ENCODE measurements at regions of chr10 and their contacts with region 1.

Region 1: DNA sequence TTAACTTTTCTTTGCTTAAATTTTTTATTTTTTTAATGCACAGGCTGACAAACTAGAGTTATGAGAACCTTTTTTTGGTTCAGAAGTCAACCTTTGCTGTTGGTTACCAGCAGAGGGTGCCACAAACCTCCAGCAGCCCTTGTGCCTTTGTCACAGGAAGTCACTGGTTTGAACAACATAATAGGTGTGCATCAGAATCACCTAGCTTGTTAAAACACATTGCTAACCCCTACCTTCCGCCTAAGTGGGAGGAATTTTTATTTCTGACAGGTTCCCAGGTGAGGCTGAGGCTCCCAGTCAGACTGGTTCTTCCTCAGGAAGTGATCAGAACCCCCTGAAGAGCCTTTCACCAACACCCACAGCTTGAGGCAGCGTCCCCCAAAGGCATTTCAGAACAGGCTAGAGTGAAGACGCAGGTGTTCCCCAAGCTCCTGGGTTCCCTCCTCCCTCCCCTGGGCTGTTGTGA is 22.6 kb upstream of the VDAC2 start:
- DNase-seq: peak; percentile 99
- ATAC-seq: peak; percentile 64
- H3K4me3 ChIP-seq: no peak overlapping the region
- H3K27ac ChIP-seq: peak overlapping the region; percentile 6
- H3K4me1 ChIP-seq: peaks cover 31% of the 10 kb centered on the region
- H3K27me3 ChIP-seq: no peaks in the 10 kb centered on the region
- CTCF ChIP-seq: peak; percentile 98

Region 2: GRCh38 chr10:74394416-74394969 is 793.5 kb before region 1 on chr10:
- CTCF ChIA-PET with region 1: no interaction called
- POLR2A ChIA-PET with region 1: no interaction called
- intact Hi-C with region 1: no loop called
- DNase-seq: peak; percentile 43
- ATAC-seq: peak; percentile 85
- H3K4me3 ChIP-seq: no peak overlapping the region
- H3K27ac ChIP-seq: no peak overlapping the region
- H3K4me1 ChIP-seq: no peaks in the 10 kb centered on the region; the same call in 1 of the 2 replicates
- H3K27me3 ChIP-seq: no peaks in the 10 kb centered on the region
- CTCF ChIP-seq: no peak

Region 3: DNA sequence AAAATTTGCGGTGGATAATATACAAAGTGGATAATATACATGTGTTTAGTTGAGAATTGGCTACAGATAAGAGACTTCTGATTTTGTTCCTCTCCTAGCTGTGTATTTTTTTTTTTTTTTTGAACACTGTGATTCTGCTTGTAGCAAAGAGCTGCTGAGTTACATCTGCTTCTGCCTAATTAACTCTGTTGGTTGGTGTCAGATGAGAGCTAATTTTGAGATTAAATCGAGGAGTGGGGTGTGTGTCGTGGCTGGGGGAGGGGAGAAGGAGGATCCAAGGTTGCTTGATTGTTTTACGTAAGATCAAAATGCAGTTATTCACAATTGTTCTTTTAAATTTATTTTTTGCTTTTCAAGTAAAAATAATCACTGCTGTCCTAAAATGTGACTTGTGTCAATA is 350.3 kb before region 1 on chr10:
- CTCF ChIA-PET with region 1: no interaction called
- POLR2A ChIA-PET with region 1: interaction called, 11 read pairs
- intact Hi-C with region 1: no loop called
- DNase-seq: no peak
- ATAC-seq: no peak
- H3K4me3 ChIP-seq: no peak overlapping the region
- H3K27ac ChIP-seq: no peak overlapping the region
- H3K4me1 ChIP-seq: peaks cover 25% of the 10 kb centered on the region
- H3K27me3 ChIP-seq: no peaks in the 10 kb centered on the region
- CTCF ChIP-seq: no peak

Region 4: GRCh38 chr10:75111367-75111906 is 76.6 kb before region 1 on chr10 and contains the start of gene SAMD8:
- CTCF ChIA-PET with region 1: no interaction called
- POLR2A ChIA-PET with region 1: no interaction called
- intact Hi-C with region 1: loop called (anchors 1 kb)
- DNase-seq: peak; percentile 100
- ATAC-seq: peak; percentile 84
- H3K4me3 ChIP-seq: peak within 1 kb of the TSS; percentile 74
- H3K27ac ChIP-seq: peak within 1 kb of the TSS; percentile 64
- H3K4me1 ChIP-seq: peaks cover 25% of the 10 kb centered on the region
- H3K27me3 ChIP-seq: no peaks in the 10 kb centered on the region
- CTCF ChIP-seq: peak; percentile 50
- total RNA-seq, gene SAMD8: 47.4 and 48.6 TPM in 2 replicates

Region 5: GRCh38 chr10:75143353-75143752 is 44.6 kb before region 1 on chr10:
- CTCF ChIA-PET with region 1: interaction called, 12 read pairs
- POLR2A ChIA-PET with region 1: no interaction called
- intact Hi-C with region 1: no loop called
- DNase-seq: no peak
- ATAC-seq: no peak
- H3K4me3 ChIP-seq: no peak overlapping the region
- H3K27ac ChIP-seq: peak overlapping the region; percentile 34; the same call in 1 of the 2 replicates
- H3K4me1 ChIP-seq: peaks cover 20% of the 10 kb centered on the region
- H3K27me3 ChIP-seq: no peaks in the 10 kb centered on the region
- CTCF ChIP-seq: no peak

Region 6: DNA sequence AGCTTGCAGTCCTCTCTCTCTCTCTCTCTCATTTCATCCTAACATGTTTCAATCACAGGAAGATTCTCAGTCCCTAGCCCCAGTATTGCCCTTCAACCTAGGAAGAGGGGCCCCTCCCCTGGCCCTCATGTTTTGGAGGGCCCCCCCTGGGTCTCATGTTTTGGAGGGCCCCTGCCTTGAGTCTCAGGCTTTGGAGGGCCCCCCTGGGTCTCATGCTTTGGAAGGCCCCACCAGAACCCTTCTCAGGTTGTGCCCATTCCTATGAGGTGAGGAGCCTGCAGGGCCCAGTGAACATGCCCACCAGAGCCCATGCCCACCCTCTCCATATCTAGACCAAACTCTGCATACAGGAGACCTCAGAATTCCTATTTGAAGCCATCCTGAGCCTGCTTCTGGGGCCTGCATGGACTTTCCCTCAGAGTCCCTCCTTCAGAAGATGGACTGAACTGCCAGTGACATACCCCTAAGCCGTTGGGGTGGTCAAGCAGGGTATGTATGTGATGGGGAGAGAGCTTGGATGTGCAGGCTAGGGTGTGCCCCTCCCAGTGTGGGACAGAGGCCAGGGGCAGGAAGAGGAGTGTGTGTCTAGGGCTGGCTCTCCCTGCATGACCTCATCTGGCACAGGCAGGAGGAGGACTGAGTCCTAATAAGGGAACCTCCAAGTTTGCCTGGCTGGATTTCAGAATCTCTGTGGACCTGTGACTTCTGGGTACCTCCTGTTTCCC is 14.5 kb after region 1 on chr10:
- CTCF ChIA-PET with region 1: interaction called, 5 read pairs
- POLR2A ChIA-PET with region 1: interaction called, 5 read pairs
- intact Hi-C with region 1: loop called (anchors 1 kb)
- DNase-seq: peak; percentile 86
- ATAC-seq: peak; percentile 95
- H3K4me3 ChIP-seq: no peak overlapping the region
- H3K27ac ChIP-seq: peak overlapping the region; percentile 27
- H3K4me1 ChIP-seq: peaks cover 26% of the 10 kb centered on the region
- H3K27me3 ChIP-seq: no peaks in the 10 kb centered on the region
- CTCF ChIP-seq: no peak

Region 7: DNA sequence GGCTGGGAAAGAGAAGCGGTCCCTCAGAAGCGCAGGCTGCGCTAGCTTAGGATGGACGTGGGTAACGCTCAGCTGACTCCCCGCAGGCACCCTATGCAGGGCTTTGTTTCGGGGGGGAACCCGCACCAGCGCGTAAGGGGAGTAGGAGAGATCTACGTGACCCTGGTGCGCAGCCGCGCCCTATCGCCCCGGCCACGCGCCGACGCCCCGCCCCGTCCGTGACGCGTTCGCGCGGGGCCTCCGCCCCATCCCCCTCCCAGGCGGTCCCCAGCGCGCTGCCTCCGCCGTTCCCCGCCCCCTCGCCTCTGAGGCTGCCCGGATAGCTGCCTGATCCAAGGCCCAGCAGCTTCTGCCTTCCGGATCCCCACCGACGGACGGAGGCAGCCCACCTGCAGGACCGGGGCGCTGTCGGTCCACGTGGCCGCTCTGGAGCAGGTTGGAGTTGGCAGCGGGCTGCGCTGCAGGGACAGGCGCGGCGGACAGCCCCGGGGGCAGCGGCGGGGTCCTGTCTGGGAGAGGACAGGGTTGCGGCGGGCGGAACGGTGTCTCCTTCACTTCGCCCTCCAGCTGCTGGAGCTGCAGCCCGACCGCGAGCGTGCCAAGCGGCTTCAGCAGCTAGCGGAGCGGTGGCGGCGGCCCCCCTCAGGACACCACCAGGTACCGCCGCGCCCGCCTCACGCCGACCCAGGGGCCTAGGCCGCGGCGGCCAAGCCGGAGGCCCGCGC is 22.4 kb after region 1 on chr10 and contains the start of gene VDAC2:
- CTCF ChIA-PET with region 1: interaction called, 65 read pairs
- POLR2A ChIA-PET with region 1: interaction called, 23 read pairs
- intact Hi-C with region 1: loop called (anchors 1 kb)
- DNase-seq: peak; percentile 99
- ATAC-seq: peak; percentile 88
- H3K4me3 ChIP-seq: peak within 1 kb of the TSS; percentile 72
- H3K27ac ChIP-seq: peak within 1 kb of the TSS; percentile 85
- H3K4me1 ChIP-seq: peaks cover 45% of the 10 kb centered on the region
- H3K27me3 ChIP-seq: no peaks in the 10 kb centered on the region
- CTCF ChIP-seq: no peak
- total RNA-seq, gene VDAC2: 463 and 542 TPM in 2 replicates

Region 8: DNA sequence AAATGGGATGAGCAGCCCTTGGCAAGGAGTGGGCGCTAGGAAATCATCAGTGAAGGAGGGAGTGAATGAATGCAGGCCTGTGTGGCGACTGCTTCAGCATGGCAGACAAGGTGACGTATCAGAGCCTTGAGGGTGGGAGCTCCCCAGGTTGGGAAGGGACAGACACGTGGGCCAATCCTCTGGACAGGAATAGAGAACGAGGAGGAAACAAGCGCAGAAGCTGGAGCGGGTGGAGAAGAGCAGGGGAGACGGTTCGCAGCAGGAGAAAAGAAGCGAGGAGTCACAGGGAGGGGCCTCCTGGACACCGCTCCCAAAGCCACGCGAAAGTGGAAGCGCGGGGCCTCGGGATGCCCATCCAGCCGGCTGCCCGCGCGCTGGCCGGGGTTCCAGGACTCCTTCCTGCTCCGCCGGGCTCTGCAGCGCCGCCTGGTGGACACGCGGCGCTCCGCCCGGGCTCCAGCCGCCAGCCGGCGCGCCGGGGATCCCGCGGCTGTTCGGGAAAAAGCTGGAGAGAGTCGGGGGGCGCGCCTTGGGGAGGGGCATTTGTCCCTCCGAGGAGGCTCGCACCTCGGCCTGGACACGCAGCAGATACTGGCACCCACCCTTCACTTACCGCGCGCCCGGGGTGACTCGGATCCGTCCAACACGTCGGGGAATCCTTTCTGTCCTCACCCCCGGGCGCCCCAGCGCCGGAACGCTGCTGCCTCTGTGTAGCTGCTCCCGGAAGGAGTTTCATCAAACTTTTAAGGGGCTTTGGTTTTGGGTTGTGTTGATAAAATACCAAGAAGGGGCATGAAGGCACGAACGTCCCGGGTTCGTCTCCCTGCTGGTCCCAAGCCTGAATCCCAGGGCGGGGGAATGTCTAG is 207.3 kb after region 1 on chr10:
- CTCF ChIA-PET with region 1: interaction called, 13 read pairs
- POLR2A ChIA-PET with region 1: no interaction called
- intact Hi-C with region 1: loop called (anchors 5 kb)
- DNase-seq: peak; percentile 93
- ATAC-seq: peak; percentile 14
- H3K4me3 ChIP-seq: peak overlapping the region; percentile 79
- H3K27ac ChIP-seq: peak overlapping the region; percentile 45
- H3K4me1 ChIP-seq: peaks cover 6% of the 10 kb centered on the region; the same call in 1 of the 2 replicates
- H3K27me3 ChIP-seq: peaks cover 61% of the 10 kb centered on the region
- CTCF ChIP-seq: peak; percentile 100

Measured in PC-3 (cell line).